Mammary epithelial cell (primary cell): ENCODE measurements at regions of chr18 and their contacts with region 1.

Region 1: DNA sequence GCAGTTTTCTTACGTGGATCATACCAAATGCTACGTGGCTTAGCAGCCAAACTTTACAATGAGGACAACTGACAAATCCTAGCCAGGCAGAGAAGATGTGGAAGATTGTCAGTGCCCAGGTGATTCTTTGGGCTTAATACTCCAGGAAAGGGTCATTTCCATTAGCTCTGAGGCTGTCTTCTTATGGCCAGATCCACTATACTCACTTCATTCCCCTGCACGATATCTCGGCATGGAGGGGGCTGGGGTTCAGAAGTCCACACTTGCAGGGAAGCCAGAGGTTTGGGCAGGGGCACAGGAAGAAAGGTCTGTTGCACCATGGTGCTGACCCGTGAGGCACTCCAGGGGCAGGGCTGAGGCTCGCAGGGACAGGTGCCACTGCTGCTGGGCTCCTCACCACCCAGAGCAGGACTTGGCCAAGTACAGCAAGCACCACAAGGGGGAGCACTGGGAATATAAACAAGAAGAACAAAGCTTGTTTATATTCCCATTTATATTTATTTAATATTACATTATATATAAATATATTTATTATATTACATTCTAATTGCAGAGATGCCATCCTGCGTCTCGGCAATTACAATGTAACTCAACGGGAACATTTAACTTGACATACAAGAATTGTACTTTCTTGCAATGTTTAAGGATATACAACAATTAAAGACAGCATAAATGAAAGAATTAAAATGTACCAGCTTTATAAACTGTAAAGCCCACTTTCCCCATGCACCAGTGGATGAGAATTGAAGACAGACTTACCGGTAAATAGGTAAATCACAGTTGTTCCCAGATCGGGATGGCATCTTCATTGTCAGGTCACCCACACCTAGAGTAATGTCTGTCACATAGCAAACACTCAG is 27.2 kb downstream of the CLUL1 start:
- DNase-seq: peak; percentile 34
- H3K4me3 ChIP-seq: no peak overlapping the region
- H3K27ac ChIP-seq: no peak overlapping the region
- H3K4me1 ChIP-seq: no peaks in the 10 kb centered on the region
- H3K27me3 ChIP-seq: peaks cover 2% of the 10 kb centered on the region
- CTCF ChIP-seq: peak; percentile 56 to 78

Region 2: DNA sequence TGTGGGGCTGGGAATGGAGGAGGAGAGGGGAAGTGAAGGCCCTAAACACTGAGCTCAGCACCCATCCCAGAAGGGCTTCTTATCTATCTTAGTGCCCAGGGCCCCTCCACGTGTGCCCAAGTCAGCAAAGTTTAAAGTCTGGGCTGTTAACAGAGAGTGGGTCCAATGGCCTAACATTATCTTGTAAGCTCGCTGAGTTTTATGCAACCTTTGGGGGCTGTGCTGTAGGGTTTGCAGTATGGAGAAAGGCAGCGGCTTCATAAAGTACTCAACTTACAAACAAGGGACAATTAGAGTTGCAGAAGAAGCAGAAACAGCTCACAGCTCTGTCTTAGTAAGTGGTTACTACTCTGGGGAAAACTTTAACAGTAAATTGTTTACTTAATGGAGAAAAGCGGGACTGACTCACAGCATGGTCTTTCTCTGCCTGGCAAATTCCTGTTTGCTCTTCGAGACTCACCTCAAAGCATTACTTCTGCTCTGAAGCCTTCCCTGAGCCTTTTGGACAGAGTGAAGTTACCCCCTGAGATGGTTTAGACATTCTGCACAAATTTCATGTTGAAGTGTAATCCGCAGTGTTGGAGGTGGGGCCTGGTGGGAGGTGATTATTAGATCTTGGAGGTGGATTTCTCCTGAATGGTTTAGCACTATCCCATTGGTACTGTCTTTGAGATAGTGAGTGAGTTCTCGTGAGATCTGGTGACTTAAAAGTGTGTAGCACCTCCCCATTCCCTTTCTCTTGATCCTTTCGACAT is 79.4 kb after region 1 on chr18:
- CTCF ChIA-PET with region 1: interaction called, 13 read pairs
- dilution Hi-C with region 1: no loop called
- in situ Hi-C with region 1: no loop called
- intact Hi-C with region 1: no loop called
- DNase-seq: peak; percentile 67
- H3K4me3 ChIP-seq: no peak overlapping the region
- H3K27ac ChIP-seq: peak overlapping the region; percentile 64
- H3K4me1 ChIP-seq: peaks cover 15% of the 10 kb centered on the region
- H3K27me3 ChIP-seq: no peaks in the 10 kb centered on the region
- CTCF ChIP-seq: no peak

Region 3: DNA sequence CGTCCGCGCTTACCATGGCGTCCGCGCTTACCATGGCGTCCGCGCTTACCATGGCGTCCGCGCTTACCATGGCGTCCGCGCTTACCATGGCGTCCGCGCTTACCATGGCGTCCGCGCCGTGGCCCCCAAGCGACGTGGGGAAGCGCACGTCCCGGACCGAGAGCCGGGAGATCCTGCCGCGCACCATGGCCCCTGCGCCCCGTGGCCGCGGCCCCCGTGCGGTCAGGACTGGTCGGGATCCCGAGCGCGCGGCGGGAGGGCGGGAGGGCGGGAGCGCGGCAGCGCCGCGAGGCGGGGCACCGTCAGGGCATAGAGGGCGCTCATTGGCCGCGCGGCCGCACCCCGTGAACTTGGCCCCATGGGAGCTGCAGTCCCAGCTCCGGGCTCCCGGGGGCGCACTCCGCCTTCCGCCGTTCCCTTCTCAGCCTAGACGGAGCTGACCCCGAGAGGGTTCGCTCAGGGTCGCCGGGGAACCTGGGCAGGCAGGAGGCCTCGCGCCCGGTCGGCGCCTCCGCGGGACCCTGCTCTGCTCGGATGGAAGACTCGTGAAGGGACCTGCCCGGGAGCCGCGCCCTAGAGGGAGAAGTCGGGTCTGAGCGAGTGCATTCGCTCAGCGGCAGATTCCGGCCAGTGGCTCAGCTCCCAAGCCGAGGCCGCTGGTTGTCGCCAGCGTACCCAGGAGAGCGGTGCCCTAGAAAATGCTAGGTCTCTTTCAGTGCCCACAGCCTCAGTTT is 88.6 kb after region 1 on chr18 and contains the start of gene ENOSF1:
- CTCF ChIA-PET with region 1: no interaction called
- dilution Hi-C with region 1: no loop called
- in situ Hi-C with region 1: no loop called
- intact Hi-C with region 1: loop called (anchors 5 kb)
- DNase-seq: peak; percentile 73
- H3K4me3 ChIP-seq: peak within 1 kb of the TSS; percentile 62 to 92 (median 78)
- H3K27ac ChIP-seq: peak within 1 kb of the TSS; percentile 88
- H3K4me1 ChIP-seq: peaks cover 12% of the 10 kb centered on the region
- H3K27me3 ChIP-seq: no peaks in the 10 kb centered on the region
- CTCF ChIP-seq: peak; percentile 54 to 81
- total RNA-seq, gene ENOSF1: 24.5 to 78.7 TPM

Region 4: GRCh38 chr18:830315-830901 is 206.4 kb after region 1 on chr18:
- CTCF ChIA-PET with region 1: interaction called, 9 read pairs
- dilution Hi-C with region 1: loop called (anchors 25 kb)
- in situ Hi-C with region 1: loop called (anchors 10 kb)
- intact Hi-C with region 1: loop called (anchors 1 kb)
- DNase-seq: peak; percentile 11
- H3K4me3 ChIP-seq: no peak overlapping the region
- H3K27ac ChIP-seq: no peak overlapping the region
- H3K4me1 ChIP-seq: peaks cover 9% of the 10 kb centered on the region
- H3K27me3 ChIP-seq: no peaks in the 10 kb centered on the region
- CTCF ChIP-seq: no peak

Region 5: DNA sequence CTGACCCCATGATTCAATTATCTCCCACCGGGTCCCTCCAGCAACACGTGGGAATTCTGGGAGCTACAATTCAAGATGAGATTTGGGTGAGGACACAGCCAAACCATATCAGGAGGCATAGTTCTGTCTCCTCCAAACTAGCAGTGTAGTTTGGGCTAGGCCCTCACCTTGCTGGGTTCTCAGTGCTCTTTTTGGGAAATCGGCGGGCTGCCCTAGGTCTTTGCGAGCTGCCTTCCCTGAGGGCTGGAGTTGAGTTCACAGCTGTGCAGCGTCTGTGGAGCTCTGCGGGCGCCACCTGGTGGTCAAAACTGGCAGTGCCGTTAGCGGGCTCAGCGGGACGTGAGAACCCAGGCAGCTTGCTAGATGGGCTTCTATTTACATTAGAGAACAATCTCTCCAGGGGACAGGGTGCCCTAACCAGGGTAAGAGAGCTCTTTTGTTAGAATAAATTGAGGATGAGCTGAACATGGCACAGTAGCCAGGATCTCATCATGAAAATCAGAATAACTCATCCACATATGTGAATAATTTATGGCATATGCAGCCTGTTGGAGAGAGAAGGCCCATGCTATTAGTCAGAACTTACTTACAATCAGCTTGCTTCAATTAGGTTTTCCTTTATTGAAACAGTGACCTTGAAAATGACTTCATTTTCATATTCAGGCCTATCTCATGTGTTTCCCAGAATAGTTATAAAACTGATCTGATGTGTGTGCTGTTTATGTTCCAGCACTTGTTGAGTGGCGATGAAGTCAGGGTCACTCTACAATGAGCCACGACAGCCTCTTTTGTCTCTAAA is 215.4 kb after region 1 on chr18:
- CTCF ChIA-PET with region 1: interaction called, 9 read pairs
- dilution Hi-C with region 1: loop called (anchors 25 kb)
- in situ Hi-C with region 1: loop called (anchors 10 kb)
- intact Hi-C with region 1: loop called (anchors 2 kb)
- DNase-seq: peak; percentile 62
- H3K4me3 ChIP-seq: no peak overlapping the region
- H3K27ac ChIP-seq: no peak overlapping the region
- H3K4me1 ChIP-seq: no peaks in the 10 kb centered on the region
- H3K27me3 ChIP-seq: no peaks in the 10 kb centered on the region
- CTCF ChIP-seq: peak; percentile 97 to 99